Activated CD8-positive, alpha-beta memory T cell treated with anti-CD3 and anti-CD28 coated beads, Interleukin-2, amount 10 ng/mL, durations not matched to agents 7 days and 5 days (primary cell): ENCODE measurements at regions of chr5 and their contacts with region 1.

Region 1: GRCh38 chr5:43105369-43106289 is 15.1 kb upstream of the ZNF131 start:
- DNase-seq: peak; percentile 93
- ATAC-seq: peak; percentile 90
- H3K4me3 Mint-ChIP-seq: peak overlapping the region; percentile 81
- H3K27ac Mint-ChIP-seq: peak overlapping the region; percentile 84
- H3K4me1 Mint-ChIP-seq: peaks cover 42% of the 10 kb centered on the region
- H3K27me3 Mint-ChIP-seq: no peaks in the 10 kb centered on the region

Region 2: GRCh38 chr5:42927730-42928129 is 177.9 kb before region 1 on chr5:
- CTCF ChIA-PET with region 1: no interaction called
- DNase-seq: no peak
- ATAC-seq: no peak
- H3K4me3 Mint-ChIP-seq: no peak overlapping the region
- H3K27ac Mint-ChIP-seq: no peak overlapping the region
- H3K4me1 Mint-ChIP-seq: no peaks in the 10 kb centered on the region
- H3K27me3 Mint-ChIP-seq: peaks cover 3% of the 10 kb centered on the region

Region 3: GRCh38 chr5:43066799-43067741 is 38.6 kb before region 1 on chr5:
- CTCF ChIA-PET with region 1: interaction called, 58 read pairs
- DNase-seq: peak; percentile 93
- ATAC-seq: peak; percentile 63
- H3K4me3 Mint-ChIP-seq: peak overlapping the region; percentile 99
- H3K27ac Mint-ChIP-seq: peak overlapping the region; percentile 97
- H3K4me1 Mint-ChIP-seq: peaks cover 41% of the 10 kb centered on the region
- H3K27me3 Mint-ChIP-seq: no peaks in the 10 kb centered on the region

Region 4: GRCh38 chr5:43075319-43076293 is 30.0 kb before region 1 on chr5:
- CTCF ChIA-PET with region 1: interaction called, 58 read pairs
- DNase-seq: no peak
- ATAC-seq: no peak
- H3K4me3 Mint-ChIP-seq: no peak overlapping the region
- H3K27ac Mint-ChIP-seq: peak overlapping the region; percentile 64
- H3K4me1 Mint-ChIP-seq: peaks cover 30% of the 10 kb centered on the region
- H3K27me3 Mint-ChIP-seq: no peaks in the 10 kb centered on the region

Region 5: GRCh38 chr5:43120720-43121564 is 15.3 kb after region 1 on chr5 and contains the start of gene ZNF131:
- CTCF ChIA-PET with region 1: interaction called, 185 read pairs
- DNase-seq: peak; percentile 97
- ATAC-seq: peak; percentile 88
- H3K4me3 Mint-ChIP-seq: peak within 1 kb of the TSS; percentile 87
- H3K27ac Mint-ChIP-seq: peak within 1 kb of the TSS; percentile 93
- H3K4me1 Mint-ChIP-seq: peaks cover 38% of the 10 kb centered on the region
- H3K27me3 Mint-ChIP-seq: no peaks in the 10 kb centered on the region
- total RNA-seq, gene ZNF131: 39.9 to 56.2 TPM

Region 6: DNA sequence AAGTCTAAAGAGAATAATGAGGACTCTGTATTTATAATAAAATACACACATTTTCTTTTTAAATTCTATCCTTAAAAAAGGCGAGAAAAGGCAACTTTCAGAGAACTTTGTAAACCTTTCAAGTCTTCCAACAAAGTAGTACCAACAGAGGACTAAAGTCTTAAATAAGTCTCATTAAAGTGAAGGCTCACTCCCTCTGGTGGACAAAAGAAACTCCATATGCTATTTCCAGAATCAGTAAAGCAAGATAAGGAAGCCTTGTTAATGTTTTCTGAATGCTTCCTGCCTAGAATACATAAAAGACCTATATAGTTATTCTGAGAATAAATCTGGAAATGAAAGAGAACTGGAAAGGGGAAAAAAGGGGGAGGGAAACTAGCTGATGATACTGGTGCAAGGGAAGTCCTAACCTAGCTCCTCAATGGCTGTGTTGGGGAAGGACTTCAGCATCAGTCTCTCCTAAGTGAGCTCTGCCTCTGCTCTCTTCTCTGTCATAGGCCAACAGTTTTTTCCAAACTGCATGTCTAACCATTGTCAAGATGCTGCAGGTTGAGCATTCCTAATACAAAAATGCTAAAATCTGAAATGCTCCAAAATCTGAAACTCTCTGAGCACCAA is 200.4 kb after region 1 on chr5:
- CTCF ChIA-PET with region 1: interaction called, 10 read pairs
- DNase-seq: no peak
- ATAC-seq: peak; percentile 31
- H3K4me3 Mint-ChIP-seq: no peak overlapping the region
- H3K27ac Mint-ChIP-seq: peak overlapping the region; percentile 81
- H3K4me1 Mint-ChIP-seq: peaks cover 72% of the 10 kb centered on the region
- H3K27me3 Mint-ChIP-seq: no peaks in the 10 kb centered on the region